ENCODE measurements at regions of chr17 and their contacts with region 1.

Region 1: DNA sequence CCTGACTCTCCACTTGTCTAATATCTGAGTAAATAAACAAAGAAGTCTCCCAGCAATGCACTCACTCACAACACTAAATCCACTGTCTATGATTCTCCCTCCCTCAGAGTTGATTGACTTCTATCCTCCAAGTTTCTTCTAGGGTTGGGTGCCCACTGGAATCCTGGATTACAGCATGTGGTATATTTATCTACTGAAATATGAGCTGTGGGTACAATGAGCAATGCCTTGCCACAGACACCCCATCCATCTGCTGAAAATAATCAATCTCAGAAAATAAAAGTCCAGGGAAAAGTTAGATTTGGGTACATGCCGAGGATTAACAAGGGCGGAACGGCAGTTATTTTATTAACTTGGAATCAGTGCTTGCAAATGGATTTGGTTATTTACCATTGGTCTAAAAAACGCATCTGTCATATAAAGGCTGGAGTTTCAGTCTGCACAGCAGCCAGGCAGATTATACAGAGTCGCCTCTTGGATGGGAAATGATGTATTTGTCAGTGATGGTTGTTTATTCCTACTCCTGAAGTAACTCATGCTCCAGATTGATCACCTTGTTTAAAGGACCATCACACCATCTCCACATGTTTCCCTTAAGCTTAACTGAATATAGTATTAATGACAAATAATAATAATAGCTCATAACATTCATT is 193.9 kb upstream of the SOX9 start:
- DNase-seq: no peak
- ATAC-seq: no peak
- H3K4me3 ChIP-seq: no peak overlapping the region
- H3K27ac ChIP-seq: no peak overlapping the region
- H3K4me1 ChIP-seq: no peaks in the 10 kb centered on the region
- H3K27me3 ChIP-seq: no peaks in the 10 kb centered on the region
- CTCF ChIP-seq: no peak
- EP300 ChIP-seq: no peak
- POLR2A ChIP-seq: no peak
- RAD21 ChIP-seq: no peak

Region 2: DNA sequence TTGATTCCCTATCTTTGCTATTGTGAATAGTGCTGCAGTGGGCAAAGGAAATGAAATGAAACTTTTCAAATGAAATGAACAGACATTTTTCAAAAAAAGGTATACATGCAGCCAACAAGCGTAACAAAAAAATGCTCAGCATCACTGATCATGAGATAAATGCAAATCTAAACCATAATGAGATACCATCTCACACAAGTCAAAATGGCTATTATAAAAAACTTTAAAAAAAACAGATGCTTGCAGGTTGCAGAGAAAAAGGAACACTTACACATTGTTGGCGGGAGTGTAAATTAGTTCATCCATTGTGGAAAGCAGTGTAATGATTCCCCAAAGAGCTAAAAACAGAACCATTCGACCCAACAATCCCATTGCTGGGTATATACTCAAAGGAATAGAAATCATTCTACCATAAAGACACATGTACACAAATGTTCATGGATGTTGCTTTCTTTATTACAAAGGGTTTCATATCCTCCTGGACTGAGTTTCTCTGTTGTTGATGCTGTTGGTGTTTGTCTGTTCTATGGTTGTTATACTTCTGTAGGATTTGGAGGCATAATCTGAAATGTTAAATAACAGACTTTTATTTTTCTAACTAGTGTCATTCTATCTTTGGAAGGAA is 94.7 kb after region 1 on chr17:
- CTCF ChIA-PET with region 1: no interaction called
- POLR2A ChIA-PET with region 1: no interaction called
- in situ Hi-C with region 1: no loop called
- intact Hi-C with region 1: loop called (anchors 1 kb)
- DNase-seq: no peak
- ATAC-seq: no peak
- H3K4me3 ChIP-seq: no peak overlapping the region
- H3K27ac ChIP-seq: no peak overlapping the region
- H3K4me1 ChIP-seq: no peaks in the 10 kb centered on the region
- H3K27me3 ChIP-seq: peaks cover 0 to 29% of the 10 kb centered on the region in 2 experiments; a peak in 3 of 5 replicates
- CTCF ChIP-seq: no peak
- EP300 ChIP-seq: no peak
- POLR2A ChIP-seq: no peak
- RAD21 ChIP-seq: no peak